Right ventricle myocardium inferior (tissue), 1 donor: ENCODE measurements at regions of chr14 and their contacts with region 1.

Region 1: GRCh38 chr14:80850197-80850814 is 91.2 kb downstream of the CEP128 start:
- DNase-seq: no peak
- ATAC-seq: no peak

Region 2: DNA sequence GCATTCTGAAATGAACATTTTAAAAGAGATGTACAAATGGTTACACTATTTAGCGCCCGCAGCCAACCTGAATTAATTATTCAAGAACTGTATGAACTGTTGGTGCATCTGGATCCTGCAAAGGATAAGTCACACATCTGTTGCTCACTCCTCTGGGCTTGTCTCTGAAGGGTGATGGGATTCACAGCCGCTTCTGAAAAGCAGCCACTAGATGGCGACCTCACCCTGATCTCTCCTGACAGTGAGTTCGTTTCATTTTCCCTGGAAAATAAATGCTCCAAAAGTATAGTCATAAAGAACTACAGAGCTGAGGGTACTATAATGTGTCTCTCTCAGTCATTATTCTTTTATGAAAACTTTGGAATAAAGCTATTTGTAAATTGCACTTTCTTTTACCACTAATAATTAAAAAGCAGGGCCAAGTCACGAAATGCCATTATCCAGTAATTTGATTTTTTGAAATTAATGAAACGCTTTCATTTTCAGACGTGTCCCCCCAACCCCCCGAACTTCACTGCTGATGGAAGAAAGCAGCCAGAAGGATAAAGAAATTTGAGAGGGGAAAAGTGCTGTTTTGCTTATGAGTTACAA is 1890.5 kb before region 1 on chr14:
- intact Hi-C with region 1: loop called (anchors 5 kb)
- DNase-seq: no peak
- ATAC-seq: peak; percentile 65

Region 3: DNA sequence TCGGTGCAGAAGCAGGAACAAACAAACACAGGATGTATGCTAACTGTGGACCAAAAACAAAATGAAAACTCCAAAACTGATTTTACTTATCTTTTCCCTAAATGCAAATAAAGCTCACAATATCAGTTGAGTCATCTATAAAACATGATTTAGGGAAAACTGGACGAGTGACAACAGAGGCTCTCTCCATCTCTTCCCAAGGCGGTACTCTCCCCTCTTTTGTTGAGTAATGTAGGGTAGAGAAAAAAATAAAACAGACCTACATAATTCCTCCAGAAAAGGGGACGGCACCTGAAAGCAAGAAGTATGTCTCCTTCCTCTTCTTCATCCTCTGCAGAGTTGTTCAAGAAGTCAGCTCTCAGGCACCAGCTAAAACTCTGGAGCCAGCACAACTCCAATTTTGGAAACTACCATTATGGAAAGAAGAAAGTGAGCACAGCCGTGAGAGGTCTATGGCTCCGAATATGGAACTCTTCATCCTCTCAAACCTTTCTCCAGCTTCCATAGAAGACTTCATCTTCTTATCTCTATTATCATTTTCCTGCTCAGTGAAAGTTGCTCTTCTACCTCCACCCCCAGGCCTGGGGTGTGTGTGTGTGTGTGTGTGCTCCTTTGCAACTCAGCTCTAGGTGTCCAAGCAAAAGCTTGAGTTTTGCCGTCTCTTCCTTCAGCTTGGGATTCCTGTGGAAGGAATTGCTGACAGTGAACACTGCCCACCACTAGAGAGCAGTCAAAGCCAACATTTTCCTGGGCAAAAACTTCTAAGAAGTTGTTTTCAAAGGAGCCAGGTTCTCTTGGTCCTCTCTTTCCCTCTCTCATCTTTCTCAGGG is 794.4 kb before region 1 on chr14:
- intact Hi-C with region 1: loop called (anchors 5 kb)
- DNase-seq: no peak
- ATAC-seq: peak; percentile 52